MCF 10A (cell line): ENCODE measurements at regions of chr3 and their contacts with region 1.

Region 1: GRCh38 chr3:63818281-63819150 is 583 bp upstream of the C3orf49 start:
- DNase-seq: peak; percentile 71
- H3K4me3 Mint-ChIP-seq: no peak overlapping the region
- H3K27ac Mint-ChIP-seq: no peak overlapping the region
- H3K4me1 Mint-ChIP-seq: peaks cover 4% of the 10 kb centered on the region
- H3K27me3 Mint-ChIP-seq: no peaks in the 10 kb centered on the region
- CTCF ChIP-seq: peak; percentile 74

Region 2: DNA sequence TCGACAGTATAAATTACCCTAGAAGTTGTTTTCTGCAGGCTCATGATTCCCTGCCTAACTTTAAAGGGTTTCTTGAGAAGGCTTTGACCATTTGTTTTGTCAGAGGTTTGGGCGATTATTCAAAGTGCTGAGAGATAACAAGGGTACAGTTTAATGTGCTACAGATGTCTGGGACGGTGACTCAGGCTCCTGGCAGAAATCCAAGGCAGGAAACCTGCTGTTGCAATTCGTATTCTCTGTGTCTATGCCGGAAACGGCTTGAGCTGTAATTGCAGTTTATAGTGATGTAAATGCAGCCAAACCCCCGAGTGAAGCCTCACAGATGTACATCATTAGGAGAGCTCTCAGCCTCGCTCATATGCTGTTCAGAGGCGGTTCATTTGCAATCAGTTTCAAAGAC is 474.8 kb before region 1 on chr3:
- CTCF ChIA-PET with region 1: interaction called, 401 read pairs
- POLR2A ChIA-PET with region 1: no interaction called
- intact Hi-C with region 1: no loop called
- DNase-seq: peak; percentile 93
- H3K4me3 Mint-ChIP-seq: no peak overlapping the region
- H3K27ac Mint-ChIP-seq: no peak overlapping the region
- H3K4me1 Mint-ChIP-seq: peaks cover 11% of the 10 kb centered on the region
- H3K27me3 Mint-ChIP-seq: peaks cover 46% of the 10 kb centered on the region
- CTCF ChIP-seq: no peak

Region 3: DNA sequence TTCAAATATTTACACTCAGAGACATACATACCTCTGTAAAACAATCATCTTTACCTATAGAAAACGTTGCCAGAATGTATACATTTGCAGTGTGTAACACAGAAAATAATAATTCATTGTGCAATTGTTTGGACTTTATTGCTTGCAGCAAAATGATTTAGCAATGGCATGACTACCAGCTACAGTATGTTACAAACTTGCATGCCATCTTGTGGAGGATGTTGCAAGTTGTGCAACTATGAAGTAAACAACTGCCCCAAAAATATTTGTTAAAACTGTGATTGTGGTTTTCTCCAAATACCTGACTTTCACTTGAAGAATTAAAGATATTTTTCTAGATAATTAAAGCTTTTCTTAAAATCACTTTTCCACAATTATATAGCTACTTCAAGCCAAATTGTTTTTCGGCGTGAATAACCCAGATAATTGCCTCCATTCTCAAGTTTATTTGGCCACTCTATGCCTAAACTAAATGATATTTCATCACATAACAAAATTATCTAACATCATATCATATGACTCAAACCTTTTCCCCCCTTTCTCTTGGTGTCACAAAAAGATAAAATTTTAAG is 26.5 kb before region 1 on chr3:
- CTCF ChIA-PET with region 1: interaction called, 8 read pairs
- POLR2A ChIA-PET with region 1: no interaction called
- intact Hi-C with region 1: loop called (anchors 1 kb)
- DNase-seq: peak; percentile 76
- H3K4me3 Mint-ChIP-seq: no peak overlapping the region
- H3K27ac Mint-ChIP-seq: no peak overlapping the region
- H3K4me1 Mint-ChIP-seq: peaks cover 9% of the 10 kb centered on the region
- H3K27me3 Mint-ChIP-seq: peaks cover 6% of the 10 kb centered on the region
- CTCF ChIP-seq: peak; percentile 63

Region 4: DNA sequence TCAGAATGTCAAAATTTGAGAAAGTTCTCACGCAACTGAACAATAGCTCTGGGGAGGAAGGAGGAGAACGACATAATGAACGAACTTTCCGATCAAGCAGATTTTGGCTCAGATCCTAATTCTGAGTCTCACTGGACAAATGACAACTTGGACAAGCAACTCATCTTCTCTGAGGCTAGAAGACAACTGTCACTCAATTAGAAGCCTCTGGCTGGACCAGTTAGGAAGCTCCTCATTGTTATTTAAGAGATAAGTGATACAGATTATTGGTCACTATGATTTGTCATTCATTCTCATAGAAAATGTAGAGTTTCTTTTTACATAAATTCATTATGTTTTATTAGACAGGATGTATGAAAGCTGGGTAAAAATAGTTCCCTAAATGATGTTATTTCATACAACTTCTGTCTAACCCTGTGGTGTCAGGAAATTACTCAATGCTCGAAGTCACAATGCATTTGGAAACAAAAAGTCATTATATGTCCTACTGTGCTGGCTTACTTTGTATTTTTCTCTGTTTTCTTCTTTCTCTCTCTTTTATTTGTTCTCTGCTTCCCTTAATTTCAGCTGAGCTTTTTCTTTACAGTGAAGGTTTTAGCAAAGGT is 10.5 kb before region 1 on chr3:
- CTCF ChIA-PET with region 1: interaction called, 60 read pairs
- POLR2A ChIA-PET with region 1: no interaction called
- intact Hi-C with region 1: no loop called
- DNase-seq: no peak
- H3K4me3 Mint-ChIP-seq: no peak overlapping the region
- H3K27ac Mint-ChIP-seq: no peak overlapping the region
- H3K4me1 Mint-ChIP-seq: peaks cover 10% of the 10 kb centered on the region
- H3K27me3 Mint-ChIP-seq: peaks cover 16% of the 10 kb centered on the region
- CTCF ChIP-seq: no peak

Region 5: DNA sequence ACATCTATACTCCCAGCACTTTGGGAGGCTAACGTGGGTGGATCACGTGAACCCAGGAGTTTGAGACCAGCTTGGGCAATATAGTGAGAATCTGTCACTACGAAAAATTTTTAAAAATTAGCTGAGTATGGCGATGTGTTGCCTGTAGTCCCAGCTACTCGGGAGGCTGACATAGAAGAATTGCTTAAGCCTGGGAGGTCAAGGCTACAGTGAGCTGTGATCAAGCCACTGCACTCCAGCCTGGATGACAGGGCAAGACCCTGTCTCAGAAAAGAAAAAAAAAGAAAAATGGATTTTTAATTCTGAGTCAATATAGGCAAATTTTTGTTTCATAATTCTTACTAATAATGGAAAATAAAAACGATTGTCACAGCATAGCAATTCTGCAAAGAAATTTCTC is 13.9 kb after region 1 on chr3:
- CTCF ChIA-PET with region 1: interaction called, 42 read pairs
- POLR2A ChIA-PET with region 1: no interaction called
- intact Hi-C with region 1: no loop called
- DNase-seq: no peak
- H3K4me3 Mint-ChIP-seq: no peak overlapping the region
- H3K27ac Mint-ChIP-seq: no peak overlapping the region
- H3K4me1 Mint-ChIP-seq: no peaks in the 10 kb centered on the region
- H3K27me3 Mint-ChIP-seq: no peaks in the 10 kb centered on the region
- CTCF ChIP-seq: no peak

Region 6: DNA sequence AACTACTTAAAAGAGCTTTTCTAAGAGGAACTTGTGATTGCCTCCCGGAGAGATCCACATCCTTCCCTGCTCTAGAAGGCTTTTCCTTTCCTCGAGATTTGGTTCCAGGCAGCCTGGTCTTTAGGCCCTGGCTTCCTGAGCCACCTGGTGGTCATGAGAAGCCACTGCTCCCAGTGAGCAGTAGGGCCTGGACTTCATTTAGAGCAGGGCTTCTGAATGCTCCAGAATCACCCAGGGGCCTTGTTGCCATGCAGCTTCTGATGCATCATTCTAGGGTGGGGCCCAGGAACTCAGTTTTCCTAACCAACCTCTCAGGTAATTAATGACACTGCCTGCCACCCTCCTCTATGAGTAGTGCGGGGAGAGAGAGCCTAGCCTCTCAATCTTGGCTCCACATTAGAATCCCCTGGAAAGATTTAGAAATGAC is 175.2 kb after region 1 on chr3:
- CTCF ChIA-PET with region 1: interaction called, 3 read pairs
- POLR2A ChIA-PET with region 1: no interaction called
- intact Hi-C with region 1: loop called (anchors 5 kb)
- DNase-seq: peak; percentile 77
- H3K4me3 Mint-ChIP-seq: no peak overlapping the region
- H3K27ac Mint-ChIP-seq: peak overlapping the region; percentile 23
- H3K4me1 Mint-ChIP-seq: no peaks in the 10 kb centered on the region
- H3K27me3 Mint-ChIP-seq: no peaks in the 10 kb centered on the region
- CTCF ChIP-seq: peak; percentile 83

Region 7: GRCh38 chr3:64248247-64248646 is 429.7 kb after region 1 on chr3:
- CTCF ChIA-PET with region 1: no interaction called
- POLR2A ChIA-PET with region 1: no interaction called
- intact Hi-C with region 1: no loop called
- DNase-seq: no peak
- H3K4me3 Mint-ChIP-seq: no peak overlapping the region
- H3K27ac Mint-ChIP-seq: no peak overlapping the region
- H3K4me1 Mint-ChIP-seq: peaks cover 21% of the 10 kb centered on the region
- H3K27me3 Mint-ChIP-seq: no peaks in the 10 kb centered on the region
- CTCF ChIP-seq: no peak